ENCODE measurements at regions of chrX and their contacts with region 1.

Region 1: GRCh38 chrX:30851449-30851848 is 37.6 kb downstream of the TAB3 start:
- DNase-seq: no peak
- H3K4me3 ChIP-seq: no peak overlapping the region
- H3K27ac ChIP-seq: no peak overlapping the region
- H3K4me1 ChIP-seq: no peaks in the 10 kb centered on the region
- H3K27me3 ChIP-seq: peaks cover 0 to 7% of the 10 kb centered on the region in 2 donors
- CTCF ChIP-seq: no peak
- POLR2A ChIP-seq: no peak

Region 2: GRCh38 chrX:30570505-30570904 is 280.9 kb before region 1 on chrX:
- intact Hi-C with region 1: no loop called
- DNase-seq: no peak
- H3K4me3 ChIP-seq: no peak overlapping the region
- H3K27ac ChIP-seq: no peak overlapping the region
- H3K4me1 ChIP-seq: no peaks in the 10 kb centered on the region
- H3K27me3 ChIP-seq: peaks cover 0 to 7% of the 10 kb centered on the region in 2 donors
- CTCF ChIP-seq: peak in 1 of 3 donors; percentile 19
- POLR2A ChIP-seq: no peak

Region 3: GRCh38 chrX:30906726-30907125 is 55.3 kb after region 1 on chrX:
- intact Hi-C with region 1: loop called (anchors 2 kb)
- DNase-seq: no peak
- H3K4me3 ChIP-seq: no peak overlapping the region
- H3K27ac ChIP-seq: no peak overlapping the region
- H3K4me1 ChIP-seq: no peaks in the 10 kb centered on the region
- H3K27me3 ChIP-seq: peaks cover 0 to 21% of the 10 kb centered on the region in 2 donors
- CTCF ChIP-seq: no peak
- POLR2A ChIP-seq: no peak

Measured in breast epithelium (tissue), 4 donors.